GM23248 (cell line): ENCODE measurements at regions of chr7 and their contacts with region 1.

Region 1: DNA sequence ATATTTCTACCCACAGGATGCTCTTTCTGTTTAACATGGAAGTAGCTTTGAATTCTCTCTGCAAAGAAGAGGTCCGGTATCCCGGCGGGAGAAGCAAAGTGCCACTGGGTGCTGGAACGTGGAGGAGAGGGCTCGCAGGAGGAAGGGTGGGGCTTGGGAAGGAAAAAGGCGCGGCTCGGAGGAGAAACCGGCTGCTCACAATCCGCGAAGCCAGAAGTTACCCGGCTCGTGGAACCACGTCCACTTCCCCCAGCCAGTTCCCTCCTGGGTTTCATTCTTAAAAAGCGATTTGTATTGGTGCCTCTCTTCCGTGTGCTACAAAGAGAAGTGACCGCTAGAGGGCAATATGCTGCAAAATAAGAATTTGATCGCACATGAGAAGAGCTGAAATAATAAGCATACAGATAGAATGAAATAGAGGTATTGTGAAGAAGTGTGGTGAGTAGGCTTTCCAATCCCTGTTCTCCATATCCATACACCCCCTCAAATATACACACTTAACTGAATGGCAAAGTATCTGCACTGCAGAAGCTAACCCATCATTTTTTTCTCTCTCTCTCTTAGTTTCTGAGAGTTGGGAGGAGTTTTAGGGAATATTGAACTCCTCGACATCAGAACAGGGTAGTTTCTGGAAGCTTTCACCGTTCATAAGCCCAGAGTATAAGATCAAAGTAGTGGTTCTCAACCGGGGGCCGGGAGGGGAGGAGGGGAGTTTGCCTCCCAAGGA is 31.1 kb downstream of the TRIL start:
- DNase-seq: peak; percentile 93
- H3K4me3 ChIP-seq: peak overlapping the region; percentile 91
- H3K27ac ChIP-seq: no peak overlapping the region
- H3K4me1 ChIP-seq: peaks cover 5% of the 10 kb centered on the region
- H3K27me3 ChIP-seq: peaks cover 7% of the 10 kb centered on the region; the same call in 1 of the 2 replicates

Region 2: GRCh38 chr7:28984631-28985030 is 57.6 kb after region 1 on chr7:
- in situ Hi-C with region 1: no loop called
- DNase-seq: peak; percentile 94
- H3K4me3 ChIP-seq: no peak overlapping the region
- H3K27ac ChIP-seq: peak overlapping the region; percentile 52
- H3K4me1 ChIP-seq: peaks cover 59% of the 10 kb centered on the region
- H3K27me3 ChIP-seq: no peaks in the 10 kb centered on the region

Region 3: GRCh38 chr7:29105752-29106668 is 179.0 kb after region 1 on chr7:
- in situ Hi-C with region 1: loop called (anchors 5 kb)
- DNase-seq: peak; percentile 77
- H3K4me3 ChIP-seq: no peak overlapping the region
- H3K27ac ChIP-seq: no peak overlapping the region
- H3K4me1 ChIP-seq: no peaks in the 10 kb centered on the region; the same call in 1 of the 2 replicates
- H3K27me3 ChIP-seq: peaks cover 25% of the 10 kb centered on the region

Region 4: GRCh38 chr7:29360633-29361625 is 433.9 kb after region 1 on chr7:
- in situ Hi-C with region 1: no loop called
- DNase-seq: peak; percentile 56
- H3K4me3 ChIP-seq: no peak overlapping the region
- H3K27ac ChIP-seq: no peak overlapping the region
- H3K4me1 ChIP-seq: no peaks in the 10 kb centered on the region; the same call in 1 of the 2 replicates
- H3K27me3 ChIP-seq: peaks cover 32% of the 10 kb centered on the region